Mammary epithelial cell (primary cell): ENCODE measurements at regions of chr4 and their contacts with region 1.

Region 1: GRCh38 chr4:56977321-56978012 is at the start of gene NOA1:
- DNase-seq: peak; percentile 98
- H3K4me3 ChIP-seq: peak within 1 kb of the TSS; percentile 87 to 99 (median 95)
- H3K27ac ChIP-seq: peak within 1 kb of the TSS; percentile 90
- H3K4me1 ChIP-seq: peaks cover 17% of the 10 kb centered on the region
- H3K27me3 ChIP-seq: no peaks in the 10 kb centered on the region
- CTCF ChIP-seq: no peak
- total RNA-seq, gene NOA1: 16.1 to 22.7 TPM

Region 2: GRCh38 chr4:56467284-56468096 is 510.0 kb before region 1 on chr4 and contains the start of gene SRP72:
- CTCF ChIA-PET with region 1: no interaction called
- dilution Hi-C with region 1: no loop called
- in situ Hi-C with region 1: loop called in 1 of 2 experiments (anchors 25 kb)
- intact Hi-C with region 1: no loop called
- DNase-seq: peak; percentile 86
- H3K4me3 ChIP-seq: peak within 1 kb of the TSS; percentile 74 to 100 (median 99)
- H3K27ac ChIP-seq: peak within 1 kb of the TSS; percentile 99
- H3K4me1 ChIP-seq: peaks cover 10% of the 10 kb centered on the region
- H3K27me3 ChIP-seq: no peaks in the 10 kb centered on the region
- CTCF ChIP-seq: no peak
- total RNA-seq, gene SRP72: 91.2 to 190 TPM

Region 3: GRCh38 chr4:56907489-56908205 is 69.8 kb before region 1 on chr4 and contains the start of gene REST:
- CTCF ChIA-PET with region 1: no interaction called
- dilution Hi-C with region 1: no loop called
- in situ Hi-C with region 1: no loop called
- intact Hi-C with region 1: loop called (anchors 1 kb)
- DNase-seq: peak; percentile 55
- H3K4me3 ChIP-seq: peak within 1 kb of the TSS; percentile 68 to 92 (median 90)
- H3K27ac ChIP-seq: peak within 1 kb of the TSS; percentile 63
- H3K4me1 ChIP-seq: peaks cover 15% of the 10 kb centered on the region
- H3K27me3 ChIP-seq: peaks cover 2% of the 10 kb centered on the region
- CTCF ChIP-seq: no peak
- total RNA-seq, gene REST: 45.6 to 52.2 TPM

Region 4: DNA sequence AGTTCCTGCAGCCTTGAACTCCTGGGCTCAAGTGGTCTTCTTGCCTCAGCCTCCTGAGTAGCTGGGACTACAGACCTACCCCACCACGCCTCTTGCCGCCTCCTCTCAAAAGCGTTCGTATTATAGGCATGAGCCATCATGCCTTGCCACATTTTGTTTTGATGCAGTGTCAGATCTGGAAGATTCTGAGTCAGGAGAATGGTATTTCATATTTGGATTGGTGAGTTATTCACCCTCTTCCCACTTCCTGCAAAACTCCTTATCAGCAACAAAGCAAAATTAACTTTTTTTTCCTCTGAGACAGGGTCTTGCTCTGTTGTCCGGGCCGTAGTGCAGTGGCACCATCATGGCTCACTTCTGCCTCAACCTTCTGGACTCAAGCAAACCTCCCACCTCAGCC is 40.2 kb before region 1 on chr4:
- CTCF ChIA-PET with region 1: no interaction called
- dilution Hi-C with region 1: no loop called
- in situ Hi-C with region 1: no loop called
- intact Hi-C with region 1: no loop called
- DNase-seq: peak; percentile 84
- H3K4me3 ChIP-seq: no peak overlapping the region
- H3K27ac ChIP-seq: no peak overlapping the region
- H3K4me1 ChIP-seq: peaks cover 14% of the 10 kb centered on the region
- H3K27me3 ChIP-seq: no peaks in the 10 kb centered on the region
- CTCF ChIP-seq: no peak

Region 5: DNA sequence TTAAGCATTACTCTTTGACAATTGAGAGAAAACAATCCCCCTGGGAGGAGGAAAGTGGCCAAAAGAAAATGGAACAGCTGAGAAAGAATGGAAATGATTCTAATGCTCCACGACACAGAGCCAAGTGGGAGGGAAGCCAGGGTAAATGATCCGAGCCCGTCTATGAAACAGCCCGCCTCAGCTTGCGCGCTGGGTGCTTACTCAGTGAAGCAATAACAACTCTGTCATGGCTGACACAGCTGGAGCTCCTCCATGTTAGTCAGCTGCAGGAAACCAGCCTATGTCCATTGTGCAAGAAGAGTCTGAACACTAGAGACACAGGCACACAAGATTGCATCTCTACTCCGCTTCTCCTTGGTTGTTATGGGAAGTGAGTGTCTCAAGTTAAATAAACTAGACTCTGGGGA is 19.4 kb before region 1 on chr4:
- CTCF ChIA-PET with region 1: no interaction called
- dilution Hi-C with region 1: no loop called
- in situ Hi-C with region 1: no loop called
- intact Hi-C with region 1: loop called (anchors 2 kb)
- DNase-seq: peak; percentile 83
- H3K4me3 ChIP-seq: no peak overlapping the region
- H3K27ac ChIP-seq: no peak overlapping the region
- H3K4me1 ChIP-seq: peaks cover 7% of the 10 kb centered on the region
- H3K27me3 ChIP-seq: no peaks in the 10 kb centered on the region
- CTCF ChIP-seq: no peak

Region 6: DNA sequence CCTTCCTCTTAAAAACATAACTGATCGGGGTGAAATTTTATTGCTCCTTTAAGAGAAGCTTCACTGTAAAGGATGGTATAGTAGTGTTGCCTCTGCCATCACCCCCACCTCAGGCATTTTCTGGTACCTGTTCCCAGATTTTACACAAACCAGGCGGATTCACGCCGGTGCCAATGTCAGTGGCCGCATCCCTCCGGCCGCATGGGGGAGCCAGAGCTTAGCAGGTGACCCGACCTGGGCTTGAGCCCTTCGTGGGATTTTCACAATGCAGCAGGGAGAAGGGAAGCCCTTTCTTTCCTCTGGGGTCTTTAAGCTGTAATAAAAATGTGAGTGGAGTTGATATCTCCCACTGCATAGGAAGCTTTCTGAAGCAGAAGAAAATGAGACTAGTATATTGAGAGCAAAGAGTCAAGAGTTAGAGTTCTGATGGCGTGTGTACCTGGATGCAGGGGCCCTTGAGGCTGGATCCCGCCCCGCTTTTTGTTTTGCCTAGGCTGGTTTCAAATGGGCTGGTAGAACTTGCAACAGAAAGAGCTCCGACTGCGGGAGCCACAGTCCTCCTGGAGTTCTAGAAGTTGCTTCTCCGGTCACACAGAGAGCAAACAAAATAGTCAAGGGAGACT is 60.6 kb after region 1 on chr4:
- CTCF ChIA-PET with region 1: no interaction called
- dilution Hi-C with region 1: no loop called
- in situ Hi-C with region 1: no loop called
- intact Hi-C with region 1: no loop called
- DNase-seq: peak; percentile 32
- H3K4me3 ChIP-seq: no peak overlapping the region
- H3K27ac ChIP-seq: no peak overlapping the region
- H3K4me1 ChIP-seq: peaks cover 9% of the 10 kb centered on the region
- H3K27me3 ChIP-seq: no peaks in the 10 kb centered on the region
- CTCF ChIP-seq: peak; percentile 89 to 98

Region 7: GRCh38 chr4:57074744-57075143 is 97.3 kb after region 1 on chr4:
- CTCF ChIA-PET with region 1: no interaction called
- dilution Hi-C with region 1: no loop called
- in situ Hi-C with region 1: no loop called
- intact Hi-C with region 1: loop called (anchors 5 kb)
- DNase-seq: peak; percentile 95
- H3K4me3 ChIP-seq: no peak overlapping the region
- H3K27ac ChIP-seq: peak overlapping the region; percentile 88
- H3K4me1 ChIP-seq: peaks cover 79% of the 10 kb centered on the region
- H3K27me3 ChIP-seq: no peaks in the 10 kb centered on the region
- CTCF ChIP-seq: peak in 1 of 2 donors; percentile 1